CD4-positive, alpha-beta T cell (primary cell): ENCODE measurements at regions of chr4 and their contacts with region 1.

Region 1: DNA sequence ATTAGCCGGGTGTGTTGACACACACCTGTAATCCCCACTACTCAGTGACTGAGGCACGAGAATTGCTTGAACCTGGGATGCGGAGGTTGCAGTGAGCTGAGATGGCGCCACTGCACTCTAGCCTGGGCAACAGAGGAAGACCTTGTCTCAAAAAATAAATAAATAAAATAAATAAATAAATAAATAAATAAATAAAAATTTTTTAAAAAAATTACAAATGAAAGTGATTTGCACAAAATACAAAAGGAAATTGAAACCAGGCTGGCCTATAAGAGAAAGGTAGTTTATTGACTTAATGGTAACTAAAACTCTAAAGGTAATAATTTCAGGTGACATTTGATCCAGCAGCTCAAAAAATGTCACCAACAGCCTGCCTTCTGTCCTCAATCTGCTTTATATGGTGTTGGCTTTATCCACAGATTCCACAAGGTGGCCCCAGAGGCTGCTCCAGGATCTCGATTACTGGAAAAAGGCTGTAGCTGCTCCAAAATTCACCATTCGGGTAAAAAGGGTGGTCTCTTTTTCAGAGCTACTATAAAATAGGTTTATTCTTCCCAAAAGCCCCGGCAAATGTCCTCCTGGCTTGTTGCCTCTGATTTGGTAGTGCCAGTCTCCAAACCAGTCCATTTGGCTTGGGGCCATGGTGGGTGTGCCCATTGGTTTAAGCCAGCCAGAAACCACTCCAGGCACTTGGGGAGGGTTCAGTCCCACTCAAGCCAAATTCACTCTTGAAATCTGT is 61.4 kb upstream of the TRIM2 start:
- DNase-seq: peak; percentile 33 to 80 (median 48)
- ATAC-seq: peak; percentile 84
- H3K4me3 ChIP-seq: no peak overlapping the region
- H3K4me3 Mint-ChIP-seq: no peak overlapping the region
- H3K27ac ChIP-seq: no peak overlapping the region
- H3K27ac Mint-ChIP-seq: no peak overlapping the region
- H3K4me1 ChIP-seq: peaks cover 4% of the 10 kb centered on the region
- H3K4me1 Mint-ChIP-seq: peaks cover 9% of the 10 kb centered on the region
- H3K27me3 ChIP-seq: no peaks in the 10 kb centered on the region
- H3K27me3 Mint-ChIP-seq: no peaks in the 10 kb centered on the region
- CTCF ChIP-seq: peak; percentile 72

Region 2: DNA sequence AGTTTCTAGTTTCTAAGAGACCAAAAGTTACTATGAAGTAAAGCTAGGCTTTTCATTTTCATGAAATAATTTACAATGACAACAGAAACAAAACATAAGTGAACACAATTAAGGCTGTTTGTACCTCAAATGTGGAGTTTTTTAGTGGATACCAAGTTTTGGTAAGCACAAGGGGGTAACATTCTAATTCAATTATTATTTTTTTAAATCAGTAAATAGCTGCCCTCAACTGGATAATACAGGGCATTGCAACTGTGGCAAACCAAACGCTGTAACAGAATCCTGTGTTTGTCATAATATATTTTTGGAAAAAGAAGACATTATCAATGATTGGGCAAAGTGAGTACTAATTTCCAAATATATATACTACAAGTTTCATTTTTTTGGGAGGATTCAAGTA is 757.3 kb before region 1 on chr4:
- CTCF ChIA-PET with region 1: no interaction called
- POLR2A ChIA-PET with region 1: no interaction called
- intact Hi-C with region 1: no loop called
- DNase-seq: peak in 4 of 14 experiments; percentile 10 to 28 (median 19)
- ATAC-seq: peak; percentile 53
- H3K4me3 ChIP-seq: no peak overlapping the region
- H3K4me3 Mint-ChIP-seq: no peak overlapping the region
- H3K27ac ChIP-seq: no peak overlapping the region
- H3K27ac Mint-ChIP-seq: peak overlapping the region; percentile 71
- H3K4me1 ChIP-seq: no peaks in the 10 kb centered on the region
- H3K4me1 Mint-ChIP-seq: peaks cover 37% of the 10 kb centered on the region
- H3K27me3 ChIP-seq: no peaks in the 10 kb centered on the region
- H3K27me3 Mint-ChIP-seq: no peaks in the 10 kb centered on the region
- CTCF ChIP-seq: peak; percentile 72

Region 3: DNA sequence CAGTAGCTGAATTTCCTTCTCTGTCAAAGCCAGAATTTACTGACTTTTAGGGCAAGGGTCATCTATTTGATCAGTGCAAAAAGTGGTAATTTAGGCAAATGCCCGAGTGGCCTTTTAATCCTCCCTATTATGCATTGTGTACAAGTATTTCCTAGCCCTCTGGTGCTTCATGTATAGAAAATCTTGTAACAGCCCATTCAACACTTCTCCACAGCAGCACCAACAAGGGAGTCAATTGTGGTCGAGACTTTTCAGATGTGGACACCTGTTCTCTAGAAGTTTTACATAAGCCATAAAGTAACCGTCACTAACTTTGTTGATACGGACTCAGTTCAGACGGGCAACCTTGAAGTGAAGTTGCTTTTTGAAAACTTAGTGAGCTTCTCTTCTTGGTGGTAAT is 257.7 kb before region 1 on chr4:
- CTCF ChIA-PET with region 1: no interaction called
- POLR2A ChIA-PET with region 1: no interaction called
- intact Hi-C with region 1: no loop called
- DNase-seq: no peak
- ATAC-seq: no peak
- H3K4me3 ChIP-seq: no peak overlapping the region
- H3K4me3 Mint-ChIP-seq: no peak overlapping the region
- H3K27ac ChIP-seq: no peak overlapping the region
- H3K27ac Mint-ChIP-seq: no peak overlapping the region
- H3K4me1 ChIP-seq: no peaks in the 10 kb centered on the region
- H3K4me1 Mint-ChIP-seq: no peaks in the 10 kb centered on the region
- H3K27me3 ChIP-seq: no peaks in the 10 kb centered on the region
- H3K27me3 Mint-ChIP-seq: no peaks in the 10 kb centered on the region
- CTCF ChIP-seq: no peak

Region 4: DNA sequence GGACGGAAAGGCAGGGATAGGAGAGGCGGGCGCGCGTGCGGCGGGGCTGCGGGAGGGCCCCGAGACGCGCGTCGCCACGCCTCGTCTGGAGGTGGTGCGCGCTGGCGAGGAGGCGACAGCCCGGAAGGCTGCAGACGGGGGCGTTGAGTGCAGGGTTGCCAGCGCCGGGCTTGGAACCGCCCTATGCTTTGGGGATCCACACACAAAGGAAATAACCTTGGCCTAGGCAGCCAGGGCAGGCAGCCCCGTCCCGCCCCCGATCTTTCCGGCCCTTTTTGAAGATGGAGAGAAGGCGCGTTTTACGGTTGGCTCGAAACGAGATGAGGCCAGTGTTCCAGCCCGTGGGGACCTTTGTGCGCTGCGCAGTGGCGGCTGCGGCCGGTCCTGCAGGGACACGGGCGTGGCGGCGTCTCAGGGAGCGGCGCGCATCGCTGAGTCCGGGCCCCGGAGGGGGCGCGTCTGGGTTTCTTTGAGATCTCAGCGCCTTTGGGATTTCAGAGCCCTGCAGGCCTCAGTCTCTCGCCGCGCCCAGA is 10.5 kb after region 1 on chr4:
- CTCF ChIA-PET with region 1: interaction called, 13 read pairs
- POLR2A ChIA-PET with region 1: interaction called, 3 read pairs
- intact Hi-C with region 1: no loop called
- DNase-seq: peak; percentile 49 to 93 (median 74)
- ATAC-seq: peak; percentile 89
- H3K4me3 ChIP-seq: peak overlapping the region; percentile 68
- H3K4me3 Mint-ChIP-seq: peak overlapping the region; percentile 95
- H3K27ac ChIP-seq: peak overlapping the region in 1 of 2 donors; percentile 67
- H3K27ac Mint-ChIP-seq: peak overlapping the region; percentile 92
- H3K4me1 ChIP-seq: peaks cover 30% of the 10 kb centered on the region
- H3K4me1 Mint-ChIP-seq: peaks cover 50% of the 10 kb centered on the region
- H3K27me3 ChIP-seq: no peaks in the 10 kb centered on the region
- H3K27me3 Mint-ChIP-seq: no peaks in the 10 kb centered on the region
- CTCF ChIP-seq: no peak

Region 5: GRCh38 chr4:153211986-153212729 is 69.3 kb after region 1 on chr4:
- CTCF ChIA-PET with region 1: no interaction called
- POLR2A ChIA-PET with region 1: no interaction called
- intact Hi-C with region 1: no loop called
- DNase-seq: no peak
- ATAC-seq: no peak
- H3K4me3 ChIP-seq: no peak overlapping the region
- H3K4me3 Mint-ChIP-seq: no peak overlapping the region
- H3K27ac ChIP-seq: no peak overlapping the region
- H3K27ac Mint-ChIP-seq: no peak overlapping the region
- H3K4me1 ChIP-seq: peaks cover under 1% of the 10 kb centered on the region
- H3K4me1 Mint-ChIP-seq: peaks cover under 1% of the 10 kb centered on the region
- H3K27me3 ChIP-seq: no peaks in the 10 kb centered on the region
- H3K27me3 Mint-ChIP-seq: no peaks in the 10 kb centered on the region
- CTCF ChIP-seq: no peak

Region 6: DNA sequence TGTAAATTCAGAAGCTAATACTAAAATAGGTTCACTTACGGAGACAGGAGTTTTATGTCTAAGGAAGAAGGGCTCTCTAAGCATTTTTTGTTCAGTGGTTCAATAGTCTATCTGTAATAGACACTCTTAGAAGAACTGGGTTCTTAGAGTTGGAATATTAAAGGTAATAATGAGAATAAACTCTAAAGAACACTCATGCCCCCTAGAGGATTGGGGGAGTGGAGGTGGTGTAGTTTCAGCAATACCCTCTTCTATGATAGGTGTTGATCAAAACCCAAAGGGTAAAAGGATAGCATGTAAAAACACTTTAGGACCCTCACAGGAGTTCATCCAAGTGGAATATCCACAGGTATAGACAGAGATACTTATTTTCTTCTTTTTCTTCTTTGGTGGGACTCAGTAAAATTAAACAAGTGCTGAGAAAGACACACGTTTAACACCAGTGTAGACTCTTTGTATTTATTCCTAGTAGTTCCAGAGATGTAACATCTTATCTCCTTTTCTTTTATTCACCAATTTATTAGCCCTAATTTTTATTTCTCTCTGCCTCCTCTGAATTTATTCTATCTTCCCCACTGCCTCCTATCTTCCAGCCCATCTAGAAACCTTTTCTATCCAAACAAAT is 175.9 kb after region 1 on chr4:
- CTCF ChIA-PET with region 1: interaction called, 16 read pairs
- POLR2A ChIA-PET with region 1: no interaction called
- intact Hi-C with region 1: loop called (anchors 1 kb)
- DNase-seq: peak in 7 of 14 experiments; percentile 3 to 66 (median 51)
- ATAC-seq: no peak
- H3K4me3 ChIP-seq: no peak overlapping the region
- H3K4me3 Mint-ChIP-seq: no peak overlapping the region
- H3K27ac ChIP-seq: no peak overlapping the region
- H3K27ac Mint-ChIP-seq: no peak overlapping the region
- H3K4me1 ChIP-seq: no peaks in the 10 kb centered on the region
- H3K4me1 Mint-ChIP-seq: no peaks in the 10 kb centered on the region
- H3K27me3 ChIP-seq: no peaks in the 10 kb centered on the region
- H3K27me3 Mint-ChIP-seq: peaks cover 3% of the 10 kb centered on the region
- CTCF ChIP-seq: peak; percentile 61

Region 7: GRCh38 chr4:153573881-153574802 is 431.3 kb after region 1 on chr4:
- CTCF ChIA-PET with region 1: no interaction called
- POLR2A ChIA-PET with region 1: no interaction called
- intact Hi-C with region 1: loop called (anchors 1 to 5 kb)
- DNase-seq: peak; percentile 47 to 83 (median 65)
- ATAC-seq: peak; percentile 97
- H3K4me3 ChIP-seq: no peak overlapping the region
- H3K4me3 Mint-ChIP-seq: peak overlapping the region; percentile 25
- H3K27ac ChIP-seq: peak overlapping the region; percentile 1 to 32
- H3K27ac Mint-ChIP-seq: peak overlapping the region; percentile 57
- H3K4me1 ChIP-seq: peaks cover 37% of the 10 kb centered on the region
- H3K4me1 Mint-ChIP-seq: peaks cover 85% of the 10 kb centered on the region
- H3K27me3 ChIP-seq: no peaks in the 10 kb centered on the region
- H3K27me3 Mint-ChIP-seq: no peaks in the 10 kb centered on the region
- CTCF ChIP-seq: peak; percentile 78

Region 8: DNA sequence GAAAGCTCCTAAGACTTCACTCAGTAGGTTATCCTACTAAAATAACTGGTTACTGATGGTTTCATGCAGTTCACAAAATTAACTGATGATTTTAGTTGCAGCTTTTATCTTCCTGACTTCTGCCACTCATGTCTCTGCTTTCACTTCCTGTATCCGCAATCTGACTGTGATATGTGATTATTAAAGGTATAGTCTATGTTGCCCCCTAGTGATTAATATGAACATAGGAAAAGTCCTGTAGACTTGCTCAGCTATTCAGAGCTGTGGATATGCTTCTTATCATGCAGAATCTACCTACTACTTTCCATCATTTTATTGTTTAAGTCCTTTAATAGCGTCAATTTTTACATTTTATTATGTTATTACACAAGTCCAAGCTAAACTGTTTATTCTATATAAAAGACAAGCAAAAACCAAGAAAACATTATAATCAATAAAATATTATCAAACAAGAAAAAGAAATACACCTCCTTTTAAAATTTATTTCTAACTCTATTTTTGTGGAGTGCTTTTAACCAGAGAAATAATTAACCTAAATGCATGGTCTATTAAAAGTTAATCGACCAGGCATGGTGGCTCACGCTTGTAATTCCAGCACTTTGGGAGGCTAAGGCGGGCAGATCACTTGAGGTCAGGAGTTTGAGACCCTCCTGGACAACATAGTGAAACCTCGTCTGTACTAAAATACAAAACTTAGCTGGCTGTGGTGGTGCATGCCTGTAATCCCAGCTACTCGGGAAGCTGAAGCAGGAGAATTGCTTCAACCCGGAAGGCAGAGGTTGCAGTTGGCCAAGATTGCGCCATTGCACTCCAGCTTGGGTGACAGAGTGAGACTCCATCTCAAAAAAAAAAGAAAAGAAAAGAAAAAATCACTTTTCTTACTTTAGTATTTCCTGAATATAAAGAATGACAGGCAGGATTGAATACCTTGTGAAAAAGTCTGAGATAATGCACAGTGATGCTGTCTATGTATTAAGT is 500.8 kb after region 1 on chr4:
- CTCF ChIA-PET with region 1: no interaction called
- POLR2A ChIA-PET with region 1: no interaction called
- intact Hi-C with region 1: loop called (anchors 2 to 10 kb)
- DNase-seq: peak in 3 of 14 experiments; percentile 72 to 81 (median 77)
- ATAC-seq: peak; percentile 99
- H3K4me3 ChIP-seq: no peak overlapping the region
- H3K4me3 Mint-ChIP-seq: no peak overlapping the region
- H3K27ac ChIP-seq: peak overlapping the region in 1 of 2 donors; percentile 18
- H3K27ac Mint-ChIP-seq: no peak overlapping the region
- H3K4me1 ChIP-seq: peaks cover 7% of the 10 kb centered on the region
- H3K4me1 Mint-ChIP-seq: peaks cover 21% of the 10 kb centered on the region
- H3K27me3 ChIP-seq: no peaks in the 10 kb centered on the region
- H3K27me3 Mint-ChIP-seq: no peaks in the 10 kb centered on the region
- CTCF ChIP-seq: peak; percentile 65

Region 9: GRCh38 chr4:153750197-153750817 is 607.4 kb after region 1 on chr4:
- CTCF ChIA-PET with region 1: no interaction called
- POLR2A ChIA-PET with region 1: no interaction called
- intact Hi-C with region 1: loop called in 1 of 2 experiments (anchors 5 kb)
- DNase-seq: peak; percentile 26 to 78 (median 50)
- ATAC-seq: peak; percentile 80
- H3K4me3 ChIP-seq: no peak overlapping the region
- H3K4me3 Mint-ChIP-seq: no peak overlapping the region
- H3K27ac ChIP-seq: no peak overlapping the region
- H3K27ac Mint-ChIP-seq: no peak overlapping the region
- H3K4me1 ChIP-seq: peaks cover 6% of the 10 kb centered on the region
- H3K4me1 Mint-ChIP-seq: peaks cover 13% of the 10 kb centered on the region
- H3K27me3 ChIP-seq: peaks cover 0 to 4% of the 10 kb centered on the region in 2 experiments
- H3K27me3 Mint-ChIP-seq: peaks cover 4% of the 10 kb centered on the region
- CTCF ChIP-seq: peak; percentile 83